ENCODE measurements at regions of chr15 and their contacts with region 1.

Region 1: GRCh38 chr15:69160141-69160993 is at the start of gene GLCE:
- DNase-seq: peak; percentile 94
- ATAC-seq: peak; percentile 93
- H3K4me3 Mint-ChIP-seq: peak within 1 kb of the TSS; percentile 90
- H3K27ac Mint-ChIP-seq: peak within 1 kb of the TSS; percentile 67
- H3K4me1 Mint-ChIP-seq: peaks cover 13% of the 10 kb centered on the region
- H3K27me3 Mint-ChIP-seq: peaks cover 8% of the 10 kb centered on the region
- CTCF ChIP-seq: no peak
- total RNA-seq, gene GLCE: 3.9 and 5.6 TPM in 2 replicates

Region 2: GRCh38 chr15:69394556-69395282 is 234.4 kb after region 1 on chr15:
- CTCF ChIA-PET with region 1: no interaction called
- POLR2A ChIA-PET with region 1: no interaction called
- intact Hi-C with region 1: loop called (anchors 5 kb)
- DNase-seq: peak; percentile 82
- ATAC-seq: peak; percentile 100
- H3K4me3 Mint-ChIP-seq: no peak overlapping the region
- H3K27ac Mint-ChIP-seq: no peak overlapping the region
- H3K4me1 Mint-ChIP-seq: peaks cover 7% of the 10 kb centered on the region
- H3K27me3 Mint-ChIP-seq: peaks cover 6% of the 10 kb centered on the region
- CTCF ChIP-seq: peak; percentile 63

Region 3: DNA sequence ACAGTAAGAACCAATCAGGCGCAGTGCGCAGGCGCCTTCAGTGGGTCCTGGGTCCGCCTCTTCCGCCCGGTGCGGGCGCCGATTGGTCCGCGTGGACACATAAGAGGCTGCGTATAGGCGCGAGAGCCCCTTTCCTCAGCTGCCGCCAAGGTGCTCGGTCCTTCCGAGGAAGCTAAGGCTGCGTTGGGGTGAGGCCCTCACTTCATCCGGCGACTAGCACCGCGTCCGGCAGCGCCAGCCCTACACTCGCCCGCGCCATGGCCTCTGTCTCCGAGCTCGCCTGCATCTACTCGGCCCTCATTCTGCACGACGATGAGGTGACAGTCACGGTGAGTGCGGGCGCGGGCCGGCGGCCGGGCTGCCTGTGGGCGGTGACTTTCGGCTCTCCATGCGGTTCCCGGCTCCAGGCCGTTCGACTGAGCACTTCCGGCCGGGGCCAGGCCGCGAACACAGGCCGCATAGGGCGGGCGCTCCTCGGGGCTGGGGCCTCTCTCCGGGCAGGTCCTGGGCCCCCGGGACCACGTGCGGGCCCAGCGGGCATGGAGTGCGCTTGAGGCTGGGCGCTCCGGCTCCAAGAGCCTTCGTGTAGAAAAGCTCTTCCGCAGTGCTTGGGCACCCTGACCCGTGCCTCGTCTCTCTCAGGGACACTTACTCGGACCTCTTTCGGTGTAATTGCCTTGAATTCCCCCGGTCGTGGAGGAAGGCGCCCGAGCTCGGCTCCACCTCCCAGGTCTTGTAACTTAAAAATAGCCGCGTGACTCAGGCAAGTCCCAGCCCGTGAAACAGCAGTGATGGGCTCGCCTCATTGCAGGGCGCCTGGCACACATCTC is 292.5 kb after region 1 on chr15 and contains the start of gene RPLP1:
- CTCF ChIA-PET with region 1: no interaction called
- POLR2A ChIA-PET with region 1: interaction called, 14 read pairs
- intact Hi-C with region 1: no loop called
- DNase-seq: peak; percentile 94
- ATAC-seq: peak; percentile 90
- H3K4me3 Mint-ChIP-seq: peak within 1 kb of the TSS; percentile 98
- H3K27ac Mint-ChIP-seq: peak within 1 kb of the TSS; percentile 99
- H3K4me1 Mint-ChIP-seq: peaks cover 46% of the 10 kb centered on the region
- H3K27me3 Mint-ChIP-seq: no peaks in the 10 kb centered on the region
- CTCF ChIP-seq: no peak
- total RNA-seq, gene RPLP1: 3,035 and 3,437 TPM in 2 replicates

Region 4: GRCh38 chr15:70763120-70763878 is 1602.9 kb after region 1 on chr15 and contains the start of gene UACA:
- CTCF ChIA-PET with region 1: no interaction called
- POLR2A ChIA-PET with region 1: no interaction called
- intact Hi-C with region 1: loop called (anchors 2 kb)
- DNase-seq: peak; percentile 75
- ATAC-seq: peak; percentile 98
- H3K4me3 Mint-ChIP-seq: peak within 1 kb of the TSS; percentile 87
- H3K27ac Mint-ChIP-seq: no peak within 1 kb of the TSS
- H3K4me1 Mint-ChIP-seq: peaks cover 22% of the 10 kb centered on the region
- H3K27me3 Mint-ChIP-seq: peaks cover 18% of the 10 kb centered on the region
- CTCF ChIP-seq: no peak
- total RNA-seq, gene UACA: 0.56 and 1.00 TPM in 2 replicates

Region 5: GRCh38 chr15:70976851-70977250 is 1816.5 kb after region 1 on chr15:
- CTCF ChIA-PET with region 1: no interaction called
- POLR2A ChIA-PET with region 1: no interaction called
- intact Hi-C with region 1: no loop called
- DNase-seq: no peak
- ATAC-seq: no peak
- H3K4me3 Mint-ChIP-seq: no peak overlapping the region
- H3K27ac Mint-ChIP-seq: no peak overlapping the region
- H3K4me1 Mint-ChIP-seq: no peaks in the 10 kb centered on the region
- H3K27me3 Mint-ChIP-seq: no peaks in the 10 kb centered on the region
- CTCF ChIP-seq: no peak